HepG2 (cell line): ENCODE measurements at regions of chr2 and their contacts with region 1.

Region 1: GRCh38 chr2:20225294-20226151 is 593 bp upstream of the SDC1 start:
- DNase-seq: peak; percentile 77
- ATAC-seq: peak; percentile 84
- H3K4me3 ChIP-seq: peak overlapping the region; percentile 77 to 81 (median 77)
- H3K27ac ChIP-seq: peak overlapping the region; percentile 69
- H3K4me1 ChIP-seq: peaks cover 38% of the 10 kb centered on the region
- H3K27me3 ChIP-seq: no peaks in the 10 kb centered on the region; a peak in 1 of 5 replicates
- CTCF ChIP-seq: peak; percentile 99
- EP300 ChIP-seq: no peak
- POLR2A ChIP-seq: no peak
- RAD21 ChIP-seq: peak; percentile 98

Region 2: GRCh38 chr2:19937004-19937403 is 288.5 kb before region 1 on chr2:
- CTCF ChIA-PET with region 1: no interaction called
- POLR2A ChIA-PET with region 1: no interaction called
- in situ Hi-C with region 1: no loop called
- intact Hi-C with region 1: no loop called
- DNase-seq: no peak
- ATAC-seq: no peak
- H3K4me3 ChIP-seq: no peak overlapping the region
- H3K27ac ChIP-seq: no peak overlapping the region
- H3K4me1 ChIP-seq: peaks cover 26% of the 10 kb centered on the region
- H3K27me3 ChIP-seq: no peaks in the 10 kb centered on the region
- CTCF ChIP-seq: no peak
- EP300 ChIP-seq: no peak
- POLR2A ChIP-seq: no peak
- RAD21 ChIP-seq: no peak

Region 3: DNA sequence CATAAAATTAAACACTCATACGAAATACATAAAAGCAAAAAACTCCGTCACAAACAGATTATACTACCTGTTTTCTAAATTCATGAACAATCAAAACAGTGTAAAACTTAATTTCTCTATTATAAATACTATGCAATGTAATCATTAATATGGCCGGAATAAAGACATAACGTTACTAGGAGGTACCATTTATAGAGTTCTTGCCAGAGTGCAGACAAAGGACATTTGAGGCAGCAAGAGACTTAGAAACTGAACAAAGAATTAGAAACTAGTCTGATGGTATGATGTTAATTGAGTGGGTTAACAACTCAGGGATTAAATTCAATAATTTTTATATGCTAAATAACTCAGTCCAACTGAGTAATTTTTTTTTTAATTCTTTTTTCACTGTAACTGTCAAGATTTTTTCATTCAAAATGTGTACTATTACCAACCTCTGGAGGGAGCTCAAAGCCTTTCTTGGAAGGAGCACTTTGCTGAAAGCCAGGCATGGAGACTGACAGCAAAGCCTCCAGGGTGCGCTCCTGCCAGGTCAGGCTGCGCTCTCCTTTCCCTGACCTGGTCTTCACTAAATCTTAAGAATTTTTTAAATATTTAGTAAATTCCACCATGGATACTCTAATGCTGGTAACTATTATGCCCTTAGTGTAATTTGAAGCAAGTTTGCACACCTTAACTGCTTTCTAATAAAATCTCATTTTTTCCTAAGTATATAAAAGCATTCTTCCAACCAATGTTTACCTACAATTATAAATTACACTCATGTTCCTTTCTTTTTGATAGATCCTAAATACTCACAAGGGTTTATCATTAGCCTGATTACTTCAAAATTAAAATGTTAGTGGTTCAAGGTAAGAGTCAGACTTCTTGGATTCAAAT is 269.7 kb before region 1 on chr2:
- CTCF ChIA-PET with region 1: no interaction called
- POLR2A ChIA-PET with region 1: no interaction called
- in situ Hi-C with region 1: no loop called
- intact Hi-C with region 1: loop called (anchors 5 kb)
- DNase-seq: peak; percentile 79
- ATAC-seq: peak; percentile 99
- H3K4me3 ChIP-seq: no peak overlapping the region
- H3K27ac ChIP-seq: no peak overlapping the region
- H3K4me1 ChIP-seq: no peaks in the 10 kb centered on the region
- H3K27me3 ChIP-seq: no peaks in the 10 kb centered on the region
- CTCF ChIP-seq: peak; percentile 92
- EP300 ChIP-seq: no peak
- POLR2A ChIP-seq: no peak
- RAD21 ChIP-seq: peak; percentile 92

Region 4: GRCh38 chr2:20108655-20109396 is 116.7 kb before region 1 on chr2:
- CTCF ChIA-PET with region 1: interaction called, 3 read pairs
- POLR2A ChIA-PET with region 1: interaction called, 11 read pairs
- in situ Hi-C with region 1: no loop called
- intact Hi-C with region 1: no loop called
- DNase-seq: peak; percentile 78
- ATAC-seq: peak; percentile 51
- H3K4me3 ChIP-seq: peak overlapping the region; percentile 38 to 59 (median 44)
- H3K27ac ChIP-seq: peak overlapping the region; percentile 58
- H3K4me1 ChIP-seq: peaks cover 82% of the 10 kb centered on the region
- H3K27me3 ChIP-seq: no peaks in the 10 kb centered on the region
- CTCF ChIP-seq: peak; percentile 22; the same call in 1 of the 2 replicates
- EP300 ChIP-seq: peak in 1 of 2 experiments; percentile 56; a peak in 2 of 4 replicates
- POLR2A ChIP-seq: no peak
- RAD21 ChIP-seq: no peak

Region 5: GRCh38 chr2:20179755-20180594 is 45.5 kb before region 1 on chr2:
- CTCF ChIA-PET with region 1: interaction called, 5 read pairs
- POLR2A ChIA-PET with region 1: interaction called, 76 read pairs
- in situ Hi-C with region 1: loop called (anchors 5 kb)
- intact Hi-C with region 1: loop called (anchors 1 kb)
- DNase-seq: peak; percentile 88
- ATAC-seq: peak; percentile 84
- H3K4me3 ChIP-seq: peak overlapping the region; percentile 47 to 73 (median 53)
- H3K27ac ChIP-seq: peak overlapping the region; percentile 60
- H3K4me1 ChIP-seq: peaks cover 76% of the 10 kb centered on the region
- H3K27me3 ChIP-seq: no peaks in the 10 kb centered on the region
- CTCF ChIP-seq: peak; percentile 63
- EP300 ChIP-seq: peak; percentile 14 to 25; a peak in 1 of 4 replicates
- POLR2A ChIP-seq: peak in 1 of 2 experiments; percentile 35; a peak in 2 of 4 replicates
- RAD21 ChIP-seq: peak; percentile 64; the same call in 1 of the 2 replicates

Region 6: GRCh38 chr2:20207051-20207450 is 18.5 kb before region 1 on chr2:
- CTCF ChIA-PET with region 1: no interaction called
- POLR2A ChIA-PET with region 1: interaction called, 94 read pairs
- in situ Hi-C with region 1: no loop called
- intact Hi-C with region 1: no loop called
- DNase-seq: no peak
- ATAC-seq: peak; percentile 1; the same call in 2 of the 3 replicates
- H3K4me3 ChIP-seq: no peak overlapping the region
- H3K27ac ChIP-seq: peak overlapping the region; percentile 70
- H3K4me1 ChIP-seq: peaks cover 73% of the 10 kb centered on the region
- H3K27me3 ChIP-seq: no peaks in the 10 kb centered on the region
- CTCF ChIP-seq: no peak
- EP300 ChIP-seq: peak in 1 of 2 experiments; percentile 20; a peak in 1 of 4 replicates
- POLR2A ChIP-seq: no peak
- RAD21 ChIP-seq: no peak